ENCODE measurements at regions of chr12 and their contacts with region 1.

Region 1: DNA sequence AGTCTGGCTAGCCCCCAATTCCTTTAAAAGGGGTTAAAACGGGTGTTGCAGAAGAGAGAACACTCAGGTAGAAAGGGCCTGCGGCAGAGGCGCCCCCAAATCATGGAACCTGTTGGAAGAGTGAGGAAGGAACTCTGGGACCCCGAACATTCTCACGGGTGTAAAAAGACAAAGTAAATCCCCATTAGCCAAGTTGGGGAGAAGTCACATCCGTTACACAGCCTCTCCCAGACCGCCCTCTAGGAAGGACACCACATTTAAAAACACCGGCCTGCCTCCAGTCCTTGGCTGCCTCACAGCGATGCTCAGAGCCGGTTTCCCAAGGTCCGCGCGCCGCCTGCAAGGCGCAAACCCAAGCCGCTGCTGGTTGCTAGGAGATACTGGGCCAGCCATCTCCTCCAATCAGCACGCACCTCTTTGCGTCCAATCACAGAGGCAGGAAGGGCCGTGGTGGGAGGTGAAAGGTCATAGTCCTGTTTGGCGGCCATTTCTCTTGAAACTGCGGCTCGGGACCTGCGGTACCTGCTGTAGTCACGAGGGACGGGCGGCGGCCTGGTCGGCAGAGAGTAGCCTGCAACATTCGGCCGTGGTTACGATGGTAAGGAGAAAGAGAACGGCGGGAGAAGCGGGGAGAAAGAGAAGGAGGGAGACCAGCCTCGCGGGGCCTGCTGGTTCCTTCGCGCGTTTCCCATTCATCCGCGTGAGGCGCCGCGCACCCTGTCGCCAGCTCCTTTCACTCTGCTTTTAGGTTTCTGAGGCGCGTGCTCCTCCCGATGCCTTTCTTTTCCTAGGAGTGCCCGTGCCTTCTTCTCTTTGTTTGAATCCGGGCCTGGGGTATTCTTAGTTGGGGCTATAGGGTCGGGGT is at the start of gene SNRPF:
- DNase-seq: peak; percentile 98
- H3K4me3 Mint-ChIP-seq: peak within 1 kb of the TSS; percentile 41
- H3K27ac Mint-ChIP-seq: no peak within 1 kb of the TSS
- H3K4me1 Mint-ChIP-seq: peaks cover 17% of the 10 kb centered on the region
- H3K27me3 Mint-ChIP-seq: peaks cover 11% of the 10 kb centered on the region
- total RNA-seq, gene SNRPF: 64.3 and 68.8 TPM in 2 replicates

Region 2: GRCh38 chr12:95003213-95003920 is 855.3 kb before region 1 on chr12 and contains the start of gene NDUFA12:
- intact Hi-C with region 1: loop called (anchors 2 kb)
- DNase-seq: peak; percentile 99
- H3K4me3 Mint-ChIP-seq: peak within 1 kb of the TSS; percentile 95
- H3K27ac Mint-ChIP-seq: peak within 1 kb of the TSS; percentile 92
- H3K4me1 Mint-ChIP-seq: peaks cover 31% of the 10 kb centered on the region
- H3K27me3 Mint-ChIP-seq: peaks cover 1% of the 10 kb centered on the region
- total RNA-seq, gene NDUFA12: 111 and 116 TPM in 2 replicates

Region 3: DNA sequence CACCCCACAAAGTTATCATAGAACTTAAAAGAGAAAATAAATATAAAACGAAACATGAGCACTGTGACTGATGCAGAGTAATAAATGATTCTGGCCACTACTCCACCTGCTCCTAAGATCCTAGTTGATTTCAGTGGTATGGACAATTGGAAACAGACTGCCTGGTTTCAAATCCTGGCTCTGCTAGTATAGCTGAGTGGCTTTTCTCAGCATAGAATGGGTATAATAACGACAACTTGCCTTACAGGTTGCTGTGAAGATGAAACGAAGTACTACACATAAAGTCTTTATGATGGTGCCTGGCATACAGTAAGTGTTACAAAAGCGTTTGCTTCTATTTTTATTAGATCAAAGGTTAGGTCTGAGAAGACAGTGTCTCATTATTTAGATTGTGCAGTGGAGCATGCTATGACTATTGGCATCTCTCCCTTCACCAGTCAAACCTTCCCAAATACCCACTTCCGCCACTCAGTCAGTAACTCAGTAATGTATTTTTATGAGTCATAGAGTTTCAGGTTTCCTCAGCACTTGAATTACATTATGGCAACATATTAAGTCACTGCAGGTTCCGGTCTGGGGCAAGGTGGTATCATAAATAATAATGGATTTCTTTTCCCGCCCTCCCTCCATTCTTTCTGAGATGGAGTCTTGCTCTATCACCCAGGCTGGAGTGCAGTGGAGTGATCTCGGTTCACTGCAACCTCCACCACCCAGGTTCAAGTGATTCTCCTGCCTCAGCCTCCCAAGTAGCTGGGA is 755.6 kb before region 1 on chr12:
- intact Hi-C with region 1: loop called (anchors 2 kb)
- DNase-seq: peak; percentile 80
- H3K4me3 Mint-ChIP-seq: peak overlapping the region; percentile 44
- H3K27ac Mint-ChIP-seq: peak overlapping the region; percentile 64
- H3K4me1 Mint-ChIP-seq: peaks cover 11% of the 10 kb centered on the region
- H3K27me3 Mint-ChIP-seq: no peaks in the 10 kb centered on the region

Region 4: GRCh38 chr12:95473884-95474659 is 384.6 kb before region 1 on chr12 and contains the start of gene METAP2:
- intact Hi-C with region 1: loop called (anchors 10 kb)
- DNase-seq: peak; percentile 97
- H3K4me3 Mint-ChIP-seq: peak within 1 kb of the TSS; percentile 94
- H3K27ac Mint-ChIP-seq: peak within 1 kb of the TSS; percentile 100
- H3K4me1 Mint-ChIP-seq: peaks cover 32% of the 10 kb centered on the region
- H3K27me3 Mint-ChIP-seq: no peaks in the 10 kb centered on the region
- total RNA-seq, gene METAP2: 125 and 133 TPM in 2 replicates

Region 5: DNA sequence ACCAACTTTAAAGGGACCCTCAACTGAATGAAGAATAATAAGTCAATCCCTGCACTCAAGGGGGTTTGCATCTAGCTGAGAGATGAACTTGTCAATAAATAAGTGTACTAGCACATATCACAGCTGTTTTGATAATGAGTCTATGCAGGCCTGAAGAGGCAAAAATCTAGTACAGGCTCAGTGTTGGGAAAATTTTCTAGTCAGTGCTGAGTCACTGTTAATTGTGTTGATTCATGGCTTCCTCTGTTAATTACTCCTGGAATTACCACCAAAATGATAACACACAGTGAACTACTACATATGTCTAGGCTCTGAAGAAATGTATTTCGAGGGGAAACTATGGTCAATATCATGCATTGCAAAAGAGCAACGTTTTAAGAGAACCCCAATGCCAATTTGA is 18.9 kb after region 1 on chr12:
- intact Hi-C with region 1: no loop called
- DNase-seq: no peak
- H3K4me3 Mint-ChIP-seq: no peak overlapping the region
- H3K27ac Mint-ChIP-seq: no peak overlapping the region
- H3K4me1 Mint-ChIP-seq: no peaks in the 10 kb centered on the region
- H3K27me3 Mint-ChIP-seq: no peaks in the 10 kb centered on the region

Region 6: GRCh38 chr12:95942524-95943329 is 84.0 kb after region 1 on chr12 and contains the start of gene CCDC38:
- intact Hi-C with region 1: loop called (anchors 2 kb)
- DNase-seq: peak; percentile 94
- H3K4me3 Mint-ChIP-seq: peak within 1 kb of the TSS; percentile 94
- H3K27ac Mint-ChIP-seq: peak within 1 kb of the TSS; percentile 90
- H3K4me1 Mint-ChIP-seq: peaks cover 8% of the 10 kb centered on the region
- H3K27me3 Mint-ChIP-seq: peaks cover 18% of the 10 kb centered on the region
- total RNA-seq, gene CCDC38: not detected in 2 replicates

Region 7: DNA sequence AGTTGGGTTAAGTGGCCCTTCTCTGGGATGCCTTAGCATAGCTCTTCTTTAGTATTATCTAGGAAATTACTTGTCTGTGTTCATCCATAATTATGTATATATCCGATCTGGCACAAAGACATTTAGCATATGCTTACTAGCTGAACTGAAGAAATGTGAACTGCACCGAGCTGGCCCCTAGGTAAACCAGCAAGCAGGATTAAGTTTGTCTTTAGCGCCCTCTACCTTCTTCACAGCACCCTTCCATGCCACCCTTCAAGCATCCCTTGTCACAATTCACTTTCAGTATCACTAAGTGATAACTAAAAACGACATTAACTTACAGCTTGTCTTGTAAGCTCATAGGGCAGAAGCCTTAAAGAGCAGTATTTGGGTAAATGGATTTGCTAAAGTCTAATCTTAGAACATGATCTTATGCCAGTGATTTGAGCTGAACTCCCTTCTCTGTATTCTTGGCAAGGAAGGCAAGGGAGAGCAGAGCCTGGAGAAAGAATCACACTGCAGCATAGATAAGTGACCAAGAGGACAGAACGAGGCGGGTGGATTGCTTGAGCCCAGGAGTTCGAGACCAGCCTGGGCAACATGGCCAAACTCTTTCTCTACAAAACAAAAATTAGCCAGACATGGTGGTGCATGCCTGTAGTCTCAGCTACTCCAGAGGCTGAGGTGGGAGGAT is 140.0 kb after region 1 on chr12:
- intact Hi-C with region 1: loop called (anchors 1 kb)
- DNase-seq: peak; percentile 86
- H3K4me3 Mint-ChIP-seq: no peak overlapping the region
- H3K27ac Mint-ChIP-seq: peak overlapping the region; percentile 7
- H3K4me1 Mint-ChIP-seq: peaks cover 9% of the 10 kb centered on the region
- H3K27me3 Mint-ChIP-seq: no peaks in the 10 kb centered on the region

Region 8: GRCh38 chr12:96035278-96036236 is 176.8 kb after region 1 on chr12 and contains the start of gene LTA4H:
- intact Hi-C with region 1: loop called (anchors 1 kb)
- DNase-seq: peak; percentile 98
- H3K4me3 Mint-ChIP-seq: no peak within 1 kb of the TSS
- H3K27ac Mint-ChIP-seq: no peak within 1 kb of the TSS
- H3K4me1 Mint-ChIP-seq: peaks cover 6% of the 10 kb centered on the region
- H3K27me3 Mint-ChIP-seq: no peaks in the 10 kb centered on the region
- total RNA-seq, gene LTA4H: 63.4 and 64.1 TPM in 2 replicates